Sciatic nerve (tissue), 2 donors: ENCODE measurements at regions of chr17 and their contacts with region 1.

Region 1: DNA sequence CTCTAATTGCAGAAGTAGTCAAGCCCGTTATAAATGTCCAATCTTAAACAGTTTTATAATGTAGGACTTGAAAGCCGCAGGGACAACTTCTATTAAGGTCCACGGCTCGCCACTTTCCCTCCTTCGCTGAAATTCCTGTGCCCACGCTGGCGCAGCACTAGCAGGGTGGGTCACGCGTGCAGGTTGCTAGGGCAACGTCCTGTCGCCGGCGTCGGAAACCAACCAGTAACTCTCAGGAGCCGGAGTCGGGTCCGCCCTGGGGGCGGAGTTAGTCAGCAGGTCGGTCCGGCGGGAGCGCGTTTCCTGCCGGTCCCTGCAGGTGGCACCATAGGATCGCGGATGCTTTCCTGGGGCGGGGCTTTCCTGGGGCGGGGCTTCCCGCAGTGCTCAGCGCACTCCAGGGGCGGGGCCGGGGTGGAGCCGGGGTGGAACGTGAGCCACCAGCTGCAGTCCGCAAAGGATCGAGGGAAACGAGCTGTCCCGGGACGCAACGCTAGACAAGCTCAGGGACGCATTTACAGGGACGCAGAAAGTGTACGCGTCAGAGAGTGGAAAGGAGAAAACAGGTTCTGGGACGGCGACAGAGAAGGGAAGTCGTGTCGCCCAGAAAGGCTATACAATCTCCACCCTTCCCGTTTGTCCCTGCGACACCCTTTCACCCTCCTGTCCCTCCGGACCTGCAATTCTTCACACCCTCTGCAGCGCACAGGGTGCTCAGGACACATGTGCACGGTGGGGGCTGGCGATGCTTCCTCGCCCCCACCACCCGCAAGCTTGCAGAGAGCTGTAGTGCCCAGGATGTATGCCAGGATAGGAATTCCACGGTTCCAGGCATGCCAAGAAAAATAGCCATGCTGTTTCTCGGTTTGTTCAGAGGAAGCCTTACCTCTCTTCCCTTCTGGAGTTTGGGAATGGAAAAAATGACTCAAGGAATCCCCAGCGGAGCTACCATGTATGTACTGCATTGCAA is 12.4 kb downstream of the COPZ2 start:
- DNase-seq: peak; percentile 99
- ATAC-seq: peak; percentile 93

Region 2: GRCh38 chr17:48071654-48072053 is 46.4 kb after region 1 on chr17:
- intact Hi-C with region 1: loop called (anchors 2 kb)
- DNase-seq: no peak
- ATAC-seq: no peak

Region 3: DNA sequence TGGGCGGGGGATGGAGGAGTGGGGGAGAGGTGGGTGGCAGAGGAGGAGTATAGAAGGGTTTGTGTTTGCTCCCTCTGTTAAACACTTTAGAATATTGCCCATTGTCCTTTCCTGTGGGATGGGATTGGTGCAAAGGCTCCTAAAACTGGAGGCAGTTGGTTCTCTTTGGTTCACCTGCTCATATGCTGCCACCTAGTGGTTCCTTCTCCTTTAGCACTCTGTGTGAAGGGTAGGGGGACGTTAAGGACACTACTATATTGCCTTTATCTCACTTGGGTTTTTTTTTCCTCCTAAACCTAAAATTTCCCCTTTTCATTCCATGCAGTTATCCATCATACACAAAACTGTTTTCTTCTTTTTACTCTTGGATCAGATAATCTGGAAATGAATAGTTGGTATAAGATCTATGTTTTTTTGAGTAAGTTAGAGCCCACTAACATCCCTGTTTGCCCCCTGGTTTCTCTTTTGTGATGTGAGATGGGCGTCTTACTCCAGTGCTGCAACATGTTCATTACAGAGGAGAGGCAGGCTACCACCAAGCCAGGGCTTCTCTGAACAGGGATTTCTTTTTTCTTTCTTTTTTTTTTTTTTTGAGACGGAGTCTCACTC is 106.1 kb after region 1 on chr17:
- intact Hi-C with region 1: loop called (anchors 2 kb)
- DNase-seq: peak; percentile 65
- ATAC-seq: peak; percentile 93